Gastrocnemius medialis (tissue), 4 donors: ENCODE measurements at regions of chr5 and their contacts with region 1.

Region 1: GRCh38 chr5:6576861-6577501 is 55.9 kb downstream of the NSUN2 start:
- DNase-seq: peak in 1 of 2 donors; percentile 36
- ATAC-seq: peak; percentile 58 to 67
- H3K4me3 ChIP-seq: no peak overlapping the region
- H3K27ac ChIP-seq: peak overlapping the region; percentile 54 to 80 (median 66)
- H3K4me1 ChIP-seq: peaks cover 6 to 13% of the 10 kb centered on the region in 2 donors
- H3K27me3 ChIP-seq: no peaks in the 10 kb centered on the region
- CTCF ChIP-seq: peak; percentile 43 to 71 (median 57)
- POLR2A ChIP-seq: no peak

Region 2: GRCh38 chr5:5492087-5492933 is 1084.7 kb before region 1 on chr5:
- in situ Hi-C with region 1: loop called in 3 of 4 experiments (anchors 10 to 25 kb)
- intact Hi-C with region 1: loop called (anchors 1 kb)
- DNase-seq: no peak
- ATAC-seq: no peak
- H3K4me3 ChIP-seq: no peak overlapping the region
- H3K27ac ChIP-seq: no peak overlapping the region
- H3K4me1 ChIP-seq: peaks cover 15 to 16% of the 10 kb centered on the region in 2 donors
- H3K27me3 ChIP-seq: no peaks in the 10 kb centered on the region
- CTCF ChIP-seq: peak; percentile 46 to 73 (median 60)
- POLR2A ChIP-seq: no peak

Region 3: GRCh38 chr5:5886812-5887486 is 690.0 kb before region 1 on chr5:
- in situ Hi-C with region 1: loop called in 2 of 4 experiments (anchors 25 kb)
- intact Hi-C with region 1: loop called (anchors 5 kb)
- DNase-seq: peak in 1 of 2 donors; percentile 15
- ATAC-seq: peak; percentile 44 to 58
- H3K4me3 ChIP-seq: no peak overlapping the region
- H3K27ac ChIP-seq: no peak overlapping the region
- H3K4me1 ChIP-seq: no peaks in the 10 kb centered on the region
- H3K27me3 ChIP-seq: peaks cover 0 to 2% (median 0%) of the 10 kb centered on the region in 3 donors
- CTCF ChIP-seq: peak in 4 of 5 experiments; percentile 24 to 81 (median 62)
- POLR2A ChIP-seq: no peak

Region 4: DNA sequence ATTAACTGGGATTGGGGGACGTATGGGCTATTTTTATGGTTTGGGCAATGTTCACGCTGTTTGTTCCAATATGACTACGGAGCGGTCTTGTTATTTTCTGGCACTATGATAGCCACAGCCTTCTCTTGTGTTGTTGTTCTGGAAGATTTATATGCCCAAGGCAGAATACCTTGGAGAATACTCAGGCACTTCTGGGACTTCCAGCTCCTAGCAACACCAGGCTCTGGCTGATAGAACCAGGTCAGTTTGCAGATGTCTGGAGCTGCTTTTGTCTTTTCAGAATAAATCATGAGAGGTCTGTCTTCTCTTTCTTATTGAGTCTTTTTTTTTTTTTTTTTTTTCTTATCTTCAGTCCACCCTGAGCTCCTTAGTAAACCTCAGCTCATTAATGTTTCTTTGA is 461.1 kb before region 1 on chr5:
- in situ Hi-C with region 1: no loop called
- intact Hi-C with region 1: no loop called
- DNase-seq: no peak
- ATAC-seq: no peak
- H3K4me3 ChIP-seq: no peak overlapping the region
- H3K27ac ChIP-seq: no peak overlapping the region
- H3K4me1 ChIP-seq: no peaks in the 10 kb centered on the region
- H3K27me3 ChIP-seq: no peaks in the 10 kb centered on the region
- CTCF ChIP-seq: no peak
- POLR2A ChIP-seq: no peak

Region 5: GRCh38 chr5:6377905-6378765 is 198.8 kb before region 1 on chr5 and contains the start of gene MED10:
- in situ Hi-C with region 1: no loop called
- intact Hi-C with region 1: loop called (anchors 2 kb)
- DNase-seq: peak; percentile 89 to 92
- ATAC-seq: peak; percentile 97 to 98
- H3K4me3 ChIP-seq: peak within 1 kb of the TSS; percentile 77 to 97 (median 87)
- H3K27ac ChIP-seq: peak within 1 kb of the TSS; percentile 78 to 92 (median 86)
- H3K4me1 ChIP-seq: peaks cover 17% of the 10 kb centered on the region in 2 donors
- H3K27me3 ChIP-seq: no peaks in the 10 kb centered on the region
- CTCF ChIP-seq: no peak
- POLR2A ChIP-seq: peak; percentile 62 to 79
- total RNA-seq, gene MED10: 15.9 to 37.5 (median 32.2) TPM

Region 6: GRCh38 chr5:6454628-6455053 is 122.3 kb before region 1 on chr5:
- in situ Hi-C with region 1: no loop called
- intact Hi-C with region 1: loop called (anchors 1 kb)
- DNase-seq: peak; percentile 88 to 93
- ATAC-seq: peak; percentile 69 to 78
- H3K4me3 ChIP-seq: peak overlapping the region; percentile 4 to 28 (median 22)
- H3K27ac ChIP-seq: peak overlapping the region; percentile 91 to 97 (median 96)
- H3K4me1 ChIP-seq: peaks cover 54 to 57% of the 10 kb centered on the region in 2 donors
- H3K27me3 ChIP-seq: no peaks in the 10 kb centered on the region
- CTCF ChIP-seq: no peak
- POLR2A ChIP-seq: peak; percentile 57 to 81

Region 7: DNA sequence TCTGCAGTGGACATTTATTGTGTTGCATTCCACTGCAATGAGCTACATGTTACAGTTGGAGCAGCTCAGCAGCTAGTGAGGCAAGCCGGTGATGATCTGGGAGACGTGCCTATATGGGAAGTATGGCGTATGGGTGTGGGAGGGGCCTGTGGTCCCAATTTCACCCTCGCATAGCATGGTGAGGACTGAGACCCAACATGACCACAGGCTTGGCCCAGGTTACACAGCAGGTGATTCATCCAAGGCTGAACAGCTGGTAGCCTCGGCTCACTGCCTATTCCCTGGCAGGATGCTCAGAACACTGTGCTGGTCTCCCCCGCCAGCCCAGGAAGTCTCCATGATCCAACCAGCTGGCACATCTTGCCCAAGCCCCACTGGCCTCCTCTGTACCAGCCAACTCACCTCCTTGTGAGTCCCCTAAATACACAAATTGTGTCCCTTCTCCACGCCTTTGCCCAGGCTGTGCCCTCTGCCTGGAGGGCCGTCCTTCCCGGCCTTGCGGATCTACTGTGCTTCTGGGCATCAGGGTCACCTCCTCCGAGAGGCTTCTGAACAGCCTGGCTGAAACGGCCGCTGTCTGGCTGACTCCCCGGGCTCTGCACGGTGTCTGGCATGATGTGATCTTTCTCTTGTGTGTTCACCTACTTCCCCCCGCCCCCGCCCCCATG is 25.6 kb before region 1 on chr5:
- in situ Hi-C with region 1: no loop called
- intact Hi-C with region 1: loop called (anchors 1 kb)
- DNase-seq: peak; percentile 93 to 97
- ATAC-seq: peak; percentile 93
- H3K4me3 ChIP-seq: peak overlapping the region in 3 of 4 donors; percentile 10 to 41 (median 25)
- H3K27ac ChIP-seq: peak overlapping the region; percentile 82 to 88 (median 84)
- H3K4me1 ChIP-seq: peaks cover 15 to 16% of the 10 kb centered on the region in 2 donors
- H3K27me3 ChIP-seq: no peaks in the 10 kb centered on the region
- CTCF ChIP-seq: no peak
- POLR2A ChIP-seq: peak in 1 of 2 donors; percentile 50

Region 8: GRCh38 chr5:6804766-6805501 is 228.0 kb after region 1 on chr5:
- in situ Hi-C with region 1: no loop called
- intact Hi-C with region 1: no loop called
- DNase-seq: no peak
- ATAC-seq: no peak
- H3K4me3 ChIP-seq: no peak overlapping the region
- H3K27ac ChIP-seq: no peak overlapping the region
- H3K4me1 ChIP-seq: no peaks in the 10 kb centered on the region
- H3K27me3 ChIP-seq: no peaks in the 10 kb centered on the region
- CTCF ChIP-seq: no peak
- POLR2A ChIP-seq: no peak